Left ventricle myocardium inferior (tissue), 1 donor: ENCODE measurements at regions of chr7 and their contacts with region 1.

Region 1: GRCh38 chr7:125670926-125671572 is 741.4 kb upstream of the POT1 start:
- DNase-seq: no peak
- H3K4me3 ChIP-seq: no peak overlapping the region
- H3K27ac ChIP-seq: no peak overlapping the region
- H3K4me1 ChIP-seq: no peaks in the 10 kb centered on the region
- H3K27me3 ChIP-seq: no peaks in the 10 kb centered on the region
- CTCF ChIP-seq: peak; percentile 56

Region 2: DNA sequence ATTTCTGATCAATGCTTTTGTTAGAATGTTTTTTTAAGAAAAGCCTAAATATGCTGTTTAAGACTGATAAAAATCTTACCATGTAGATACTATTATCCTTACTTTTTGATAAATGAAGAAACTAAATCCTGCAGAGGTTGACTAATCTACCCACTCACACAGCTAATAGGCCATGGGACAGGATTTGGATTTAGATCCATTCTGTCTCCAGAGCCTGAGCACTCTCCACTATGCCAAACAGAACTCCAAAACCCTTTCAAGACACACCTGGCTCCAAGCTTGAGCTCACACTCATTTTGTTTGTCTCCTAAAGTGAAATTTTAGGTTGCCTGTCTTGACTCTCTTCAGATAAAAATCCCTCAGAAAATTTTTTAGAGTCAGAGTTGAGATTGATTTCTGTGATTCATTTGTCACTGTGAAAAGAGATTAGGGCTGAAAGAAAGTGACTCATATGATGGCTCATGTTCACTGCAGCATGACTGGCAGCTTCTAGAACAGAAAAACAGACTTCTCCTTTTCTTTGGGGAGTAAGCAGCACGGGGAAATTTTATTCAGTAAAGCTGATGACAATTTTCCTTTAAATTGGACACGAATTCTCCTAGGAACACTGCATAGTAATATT is 609.2 kb before region 1 on chr7:
- intact Hi-C with region 1: loop called (anchors 10 kb)
- DNase-seq: no peak
- H3K4me3 ChIP-seq: no peak overlapping the region
- H3K27ac ChIP-seq: no peak overlapping the region
- H3K4me1 ChIP-seq: peaks cover 5% of the 10 kb centered on the region
- H3K27me3 ChIP-seq: peaks cover 4% of the 10 kb centered on the region
- CTCF ChIP-seq: no peak